ENCODE measurements at regions of chr3 and their contacts with region 1.

Region 1: GRCh38 chr3:9932843-9933560 is 632 bp upstream of the CRELD1 start:
- DNase-seq: peak; percentile 83
- ATAC-seq: peak; percentile 71
- H3K4me3 Mint-ChIP-seq: peak overlapping the region; percentile 98
- H3K27ac Mint-ChIP-seq: peak overlapping the region; percentile 98
- H3K4me1 Mint-ChIP-seq: peaks cover 41% of the 10 kb centered on the region
- H3K27me3 Mint-ChIP-seq: no peaks in the 10 kb centered on the region
- CTCF ChIP-seq: peak; percentile 71

Region 2: GRCh38 chr3:9503283-9503682 is 429.7 kb before region 1 on chr3:
- CTCF ChIA-PET with region 1: no interaction called
- POLR2A ChIA-PET with region 1: no interaction called
- intact Hi-C with region 1: loop called (anchors 5 kb)
- DNase-seq: peak; percentile 63
- ATAC-seq: peak; percentile 83
- H3K4me3 Mint-ChIP-seq: no peak overlapping the region
- H3K27ac Mint-ChIP-seq: no peak overlapping the region
- H3K4me1 Mint-ChIP-seq: peaks cover 26% of the 10 kb centered on the region
- H3K27me3 Mint-ChIP-seq: peaks cover 35% of the 10 kb centered on the region
- CTCF ChIP-seq: peak; percentile 50

Region 3: GRCh38 chr3:9809615-9810432 is 123.2 kb before region 1 on chr3 and contains the start of gene TTLL3:
- CTCF ChIA-PET with region 1: no interaction called
- POLR2A ChIA-PET with region 1: interaction called, 12 read pairs
- intact Hi-C with region 1: loop called (anchors 5 kb)
- DNase-seq: peak; percentile 55
- ATAC-seq: peak; percentile 69
- H3K4me3 Mint-ChIP-seq: peak within 1 kb of the TSS; percentile 91
- H3K27ac Mint-ChIP-seq: peak within 1 kb of the TSS; percentile 98
- H3K4me1 Mint-ChIP-seq: peaks cover 33% of the 10 kb centered on the region
- H3K27me3 Mint-ChIP-seq: no peaks in the 10 kb centered on the region
- CTCF ChIP-seq: no peak
- total RNA-seq, gene TTLL3: 51.4 and 61.9 TPM in 2 replicates

Region 4: GRCh38 chr3:9946112-9947024 is 13.4 kb after region 1 on chr3:
- CTCF ChIA-PET with region 1: interaction called, 29 read pairs
- POLR2A ChIA-PET with region 1: interaction called, 76 read pairs
- intact Hi-C with region 1: loop called (anchors 1 kb)
- DNase-seq: peak; percentile 75
- ATAC-seq: peak; percentile 91
- H3K4me3 Mint-ChIP-seq: peak overlapping the region; percentile 79
- H3K27ac Mint-ChIP-seq: peak overlapping the region; percentile 79
- H3K4me1 Mint-ChIP-seq: peaks cover 11% of the 10 kb centered on the region
- H3K27me3 Mint-ChIP-seq: no peaks in the 10 kb centered on the region
- CTCF ChIP-seq: no peak

Region 5: GRCh38 chr3:9994086-9994844 is 61.3 kb after region 1 on chr3:
- CTCF ChIA-PET with region 1: no interaction called
- POLR2A ChIA-PET with region 1: no interaction called
- intact Hi-C with region 1: no loop called
- DNase-seq: no peak
- ATAC-seq: no peak
- H3K4me3 Mint-ChIP-seq: no peak overlapping the region
- H3K27ac Mint-ChIP-seq: no peak overlapping the region
- H3K4me1 Mint-ChIP-seq: no peaks in the 10 kb centered on the region
- H3K27me3 Mint-ChIP-seq: no peaks in the 10 kb centered on the region
- CTCF ChIP-seq: no peak

Region 6: GRCh38 chr3:10026084-10026890 is 93.3 kb after region 1 on chr3 and contains the start of gene FANCD2:
- CTCF ChIA-PET with region 1: no interaction called
- POLR2A ChIA-PET with region 1: interaction called, 10 read pairs
- intact Hi-C with region 1: loop called (anchors 1 kb)
- DNase-seq: peak; percentile 97
- ATAC-seq: peak; percentile 86
- H3K4me3 Mint-ChIP-seq: peak within 1 kb of the TSS; percentile 96
- H3K27ac Mint-ChIP-seq: peak within 1 kb of the TSS; percentile 96
- H3K4me1 Mint-ChIP-seq: peaks cover 37% of the 10 kb centered on the region
- H3K27me3 Mint-ChIP-seq: no peaks in the 10 kb centered on the region
- CTCF ChIP-seq: no peak
- total RNA-seq, gene FANCD2: 26.8 and 31.4 TPM in 2 replicates

Region 7: DNA sequence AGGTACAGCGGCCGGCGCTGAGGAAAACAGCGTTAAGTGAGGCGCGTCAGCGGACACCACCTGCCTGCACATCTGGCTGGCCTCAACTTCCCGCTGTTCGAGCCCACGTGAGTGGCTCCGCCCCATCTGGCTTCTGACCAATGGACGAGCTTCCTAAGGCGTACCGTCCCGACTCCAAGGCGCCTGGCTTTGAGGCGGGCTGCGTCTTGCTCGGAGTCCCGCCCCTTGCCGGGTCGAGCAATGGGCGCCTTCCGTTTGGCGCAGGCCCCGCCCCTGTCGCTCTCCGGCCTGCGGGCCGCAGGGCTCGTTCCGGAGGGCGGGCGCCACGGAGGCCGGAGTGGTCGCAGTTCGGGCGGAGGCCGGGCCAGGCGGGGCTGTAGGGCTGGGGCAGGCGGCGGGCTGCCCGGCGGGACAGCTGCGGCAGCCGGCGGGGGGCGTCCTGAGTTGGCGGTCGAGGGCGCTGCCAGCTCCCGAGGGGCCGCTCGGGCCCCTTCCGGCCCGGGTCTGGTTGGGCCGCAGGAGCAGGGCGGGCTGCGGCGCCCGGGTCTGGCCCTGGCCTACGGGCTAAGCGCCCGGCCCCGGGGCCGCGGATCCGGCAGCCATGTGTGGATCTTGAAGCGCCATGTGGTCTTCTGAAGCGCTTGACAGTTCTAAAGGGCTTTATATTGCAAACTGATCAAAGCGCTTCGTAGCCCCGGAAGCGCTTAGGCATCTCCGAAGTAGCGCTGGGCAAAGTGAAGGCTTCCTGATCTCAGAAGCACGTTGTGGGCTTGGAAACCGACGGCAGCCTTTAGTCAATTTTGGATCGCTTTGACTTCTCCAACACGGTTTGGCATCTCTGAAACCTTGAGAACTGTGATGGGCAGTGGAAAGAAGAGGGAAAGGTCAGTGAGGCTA is 315.4 kb after region 1 on chr3 and contains the start of gene TATDN2:
- CTCF ChIA-PET with region 1: interaction called, 3 read pairs
- POLR2A ChIA-PET with region 1: interaction called, 11 read pairs
- intact Hi-C with region 1: loop called (anchors 1 kb)
- DNase-seq: peak; percentile 88
- ATAC-seq: peak; percentile 97
- H3K4me3 Mint-ChIP-seq: peak within 1 kb of the TSS; percentile 95
- H3K27ac Mint-ChIP-seq: peak within 1 kb of the TSS; percentile 91
- H3K4me1 Mint-ChIP-seq: peaks cover 39% of the 10 kb centered on the region
- H3K27me3 Mint-ChIP-seq: no peaks in the 10 kb centered on the region
- CTCF ChIP-seq: no peak
- total RNA-seq, gene TATDN2: 55.6 and 56.2 TPM in 2 replicates